Motor neuron (in vitro differentiated cells): ENCODE measurements at regions of chrX and their contacts with region 1.

Region 1: DNA sequence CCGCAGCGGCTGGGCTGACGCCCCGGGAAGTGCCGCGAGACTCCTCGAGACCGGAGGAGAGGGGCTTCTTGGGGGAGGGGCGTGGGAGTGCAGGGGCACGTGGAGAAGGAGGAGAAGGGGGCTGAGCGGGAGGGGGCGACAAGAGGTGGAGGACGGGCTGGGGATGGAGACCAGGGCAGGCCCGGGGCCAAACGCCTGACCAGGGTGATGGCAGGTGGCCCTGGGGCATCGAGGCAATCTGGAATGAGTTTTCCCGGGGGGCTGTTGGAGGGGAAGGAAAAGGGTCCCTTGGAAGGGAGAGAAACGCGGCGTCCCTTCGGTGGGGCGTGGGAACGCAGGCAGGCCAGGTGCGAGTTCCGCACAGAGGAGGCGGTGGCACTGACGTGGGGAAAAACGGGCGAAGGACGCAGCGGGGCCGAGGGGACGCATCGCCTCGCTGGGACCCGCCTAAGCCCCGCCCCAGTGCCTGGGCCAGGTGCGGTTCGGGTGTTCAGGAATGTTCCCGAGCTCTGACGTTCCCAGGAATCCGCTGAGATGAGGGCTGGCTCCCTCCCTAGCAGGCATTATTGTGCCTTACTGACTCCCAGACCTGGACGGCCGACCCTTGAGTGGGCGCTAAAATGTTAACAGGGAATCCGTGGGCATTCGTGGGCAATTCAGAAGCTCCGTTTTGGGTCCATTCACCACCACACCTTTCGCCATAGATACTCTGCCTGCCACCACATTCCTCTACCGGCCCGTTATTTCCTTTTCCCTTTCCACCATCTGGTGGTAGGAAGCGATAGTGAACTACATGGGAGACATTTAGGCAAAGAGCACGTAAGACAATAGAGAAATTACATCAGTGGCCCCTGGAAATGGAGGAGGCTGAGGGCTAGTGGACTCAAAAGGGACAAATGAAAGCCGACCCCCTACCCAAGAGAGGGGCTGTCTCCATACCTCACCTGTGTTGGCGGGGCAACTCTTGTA is 795 bp upstream of the SH3KBP1 start:
- ATAC-seq: peak; percentile 52 to 68 (median 58)
- H3K4me3 ChIP-seq: peak overlapping the region; percentile 65 to 97 (median 68)
- H3K27ac ChIP-seq: peak overlapping the region; percentile 75 to 81
- H3K4me1 ChIP-seq: peaks cover 0 to 4% of the 10 kb centered on the region in 2 donors

Region 2: DNA sequence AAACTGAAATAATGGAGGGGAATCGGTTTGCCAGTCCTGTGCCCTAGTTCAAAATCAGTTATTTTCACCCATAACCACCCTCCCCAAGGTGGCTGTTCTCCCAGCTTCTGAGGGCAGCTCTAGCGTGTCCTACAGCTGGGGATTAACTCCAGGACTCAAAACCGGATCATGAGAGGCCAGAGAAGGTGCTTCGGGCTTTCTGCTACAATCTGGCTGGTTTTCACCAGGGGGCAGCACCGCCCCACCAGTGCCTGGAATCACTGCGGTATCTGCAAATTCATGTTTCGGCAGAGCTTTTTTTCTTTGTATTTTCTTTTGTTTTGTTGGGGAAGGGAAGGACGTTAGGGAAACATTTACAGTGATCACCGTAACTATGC is 516.0 kb before region 1 on chrX:
- in situ Hi-C with region 1: loop called in 1 of 9 experiments (anchors 25 kb)
- ATAC-seq: peak; percentile 78 to 95 (median 86)
- H3K4me3 ChIP-seq: peak overlapping the region; percentile 3 to 29 (median 26)
- H3K27ac ChIP-seq: peak overlapping the region in 1 of 2 donors; percentile 52
- H3K4me1 ChIP-seq: peaks cover 0 to 4% of the 10 kb centered on the region in 2 donors

Region 3: GRCh38 chrX:19544693-19545305 is 343.4 kb before region 1 on chrX:
- in situ Hi-C with region 1: loop called in 1 of 9 experiments (anchors 25 kb)
- ATAC-seq: peak in 7 of 8 experiments; percentile 48 to 72 (median 59)
- H3K4me3 ChIP-seq: no peak overlapping the region
- H3K27ac ChIP-seq: no peak overlapping the region
- H3K4me1 ChIP-seq: no peaks in the 10 kb centered on the region

Region 4: DNA sequence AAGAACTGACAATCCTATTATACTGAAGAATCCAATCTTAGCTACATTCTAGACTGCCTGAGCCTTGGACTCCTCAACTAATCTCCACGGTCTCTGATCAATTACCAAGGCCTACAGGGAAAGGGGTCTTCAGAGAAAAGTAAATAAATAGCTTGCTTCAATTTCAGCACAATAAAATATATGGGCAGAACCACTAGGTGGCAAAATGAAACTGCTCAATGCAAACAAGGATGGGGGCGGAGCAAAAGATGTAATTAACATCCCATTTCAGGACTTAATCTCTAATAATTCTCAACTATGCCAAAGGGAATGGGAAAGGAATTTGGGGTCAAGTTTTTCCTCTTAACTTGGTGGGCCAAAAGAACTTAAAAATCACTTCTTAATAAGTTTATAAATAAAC is 294.5 kb before region 1 on chrX:
- in situ Hi-C with region 1: loop called in 2 of 9 experiments (anchors 25 kb)
- ATAC-seq: no peak
- H3K4me3 ChIP-seq: no peak overlapping the region
- H3K27ac ChIP-seq: no peak overlapping the region
- H3K4me1 ChIP-seq: peaks cover 5 to 9% of the 10 kb centered on the region in 2 donors

Region 5: GRCh38 chrX:19739683-19740082 is 148.5 kb before region 1 on chrX:
- in situ Hi-C with region 1: loop called in 1 of 9 experiments (anchors 10 kb)
- ATAC-seq: peak in 5 of 8 experiments; percentile 55 to 88 (median 74)
- H3K4me3 ChIP-seq: no peak overlapping the region
- H3K27ac ChIP-seq: no peak overlapping the region
- H3K4me1 ChIP-seq: peaks cover 13 to 15% of the 10 kb centered on the region in 2 donors